ENCODE measurements at regions of chr15 and their contacts with region 1.

Region 1: DNA sequence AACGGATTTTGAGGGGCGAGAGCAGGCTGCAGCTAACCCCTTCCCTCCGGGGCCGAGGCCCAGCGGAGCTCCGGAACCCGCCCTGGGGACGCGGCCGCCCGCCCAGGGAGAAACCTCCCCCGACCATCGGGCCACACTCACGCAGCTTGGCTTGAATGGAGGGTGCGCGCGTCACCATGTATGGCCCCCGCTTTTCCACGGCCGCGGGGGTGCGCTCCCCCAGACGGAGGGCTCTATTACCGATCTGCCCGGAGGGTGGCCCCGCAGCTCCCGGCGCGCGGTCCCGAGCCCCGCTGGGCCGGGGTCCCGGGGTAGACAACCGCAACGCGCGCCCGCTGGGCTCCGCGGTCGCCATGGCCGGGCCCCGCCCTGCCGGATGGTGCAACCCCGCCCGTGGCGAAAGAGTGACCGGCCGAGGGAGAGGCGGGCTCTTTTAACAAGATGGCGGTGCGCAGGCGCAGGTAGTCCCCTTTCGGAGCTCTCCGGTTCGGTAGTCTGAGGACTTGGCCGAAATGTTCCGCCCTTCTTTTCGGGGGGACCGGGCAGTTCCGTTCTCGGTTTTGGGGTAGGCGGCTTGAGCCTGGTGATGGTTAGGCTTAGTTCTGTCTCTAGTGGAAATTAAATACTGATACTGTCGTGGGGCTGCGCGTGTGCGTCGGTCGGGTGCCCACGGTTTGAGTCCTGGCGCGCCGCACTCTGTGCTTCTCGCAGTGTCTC is at the start of gene FAM219B:
- DNase-seq: peak; percentile 87
- H3K4me3 ChIP-seq: peak within 1 kb of the TSS; percentile 38 to 79 (median 73)
- H3K27ac ChIP-seq: peak within 1 kb of the TSS; percentile 32
- H3K4me1 ChIP-seq: peaks cover 11% of the 10 kb centered on the region
- H3K27me3 ChIP-seq: no peaks in the 10 kb centered on the region
- CTCF ChIP-seq: no peak
- POLR2A ChIP-seq: peak; percentile 98
- total RNA-seq, gene FAM219B: 57.0 and 73.0 TPM in 2 replicates

Region 2: DNA sequence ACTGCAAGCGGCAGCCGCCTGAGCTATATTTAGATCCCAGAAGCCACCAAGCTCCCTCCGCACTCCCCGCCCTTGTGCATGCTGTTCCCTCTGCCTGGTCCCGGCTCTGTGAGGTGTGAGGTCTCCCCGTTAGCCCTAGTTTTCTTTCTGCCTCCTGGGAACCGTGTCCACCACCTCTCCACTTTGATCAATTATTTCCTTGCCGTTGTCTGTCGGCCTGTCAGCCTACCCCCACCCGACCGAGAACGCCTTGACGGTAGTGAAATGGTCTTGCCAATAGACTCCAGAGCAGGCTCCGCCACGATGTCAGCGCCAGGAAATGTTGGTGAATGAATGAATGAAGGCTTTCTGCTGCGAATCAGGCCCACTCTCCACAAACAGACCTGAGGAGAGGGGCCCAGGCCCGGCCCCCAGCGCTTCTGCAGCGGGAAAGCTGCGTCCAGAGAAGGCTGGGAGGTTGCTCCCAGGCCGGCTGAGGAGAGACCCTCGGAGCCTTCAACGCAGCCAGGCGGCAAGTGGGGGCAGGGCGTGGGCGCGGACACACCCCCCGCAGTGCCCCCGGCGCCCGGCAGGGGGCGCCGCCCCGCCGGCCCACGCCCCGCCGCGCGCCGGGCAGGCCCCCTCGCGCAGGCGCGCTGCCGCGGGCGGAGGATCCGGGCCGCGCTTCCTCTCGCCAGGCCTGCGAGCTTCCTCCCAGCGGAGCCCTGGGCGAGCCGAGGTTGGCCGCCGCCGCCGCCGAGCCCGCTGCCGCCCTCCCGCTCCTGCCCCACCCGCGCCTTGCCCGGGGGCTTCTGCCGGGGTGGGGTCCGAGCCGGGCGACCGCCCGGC is 125.0 kb before region 1 on chr15 and contains the start of gene CSK:
- CTCF ChIA-PET with region 1: interaction called, 21 read pairs
- POLR2A ChIA-PET with region 1: no interaction called
- dilution Hi-C with region 1: no loop called
- intact Hi-C with region 1: no loop called
- DNase-seq: peak; percentile 53
- H3K4me3 ChIP-seq: peak within 1 kb of the TSS; percentile 88 to 94 (median 90)
- H3K27ac ChIP-seq: peak within 1 kb of the TSS; percentile 62
- H3K4me1 ChIP-seq: peaks cover 37% of the 10 kb centered on the region
- H3K27me3 ChIP-seq: no peaks in the 10 kb centered on the region
- CTCF ChIP-seq: peak; percentile 52 to 65
- POLR2A ChIP-seq: peak; percentile 67
- total RNA-seq, gene CSK: 89.1 and 104 TPM in 2 replicates

Region 3: GRCh38 chr15:74835307-74835823 is 71.2 kb before region 1 on chr15:
- CTCF ChIA-PET with region 1: interaction called, 37 read pairs
- POLR2A ChIA-PET with region 1: no interaction called
- dilution Hi-C with region 1: no loop called
- intact Hi-C with region 1: no loop called
- DNase-seq: peak; percentile 51
- H3K4me3 ChIP-seq: no peak overlapping the region
- H3K27ac ChIP-seq: no peak overlapping the region
- H3K4me1 ChIP-seq: no peaks in the 10 kb centered on the region
- H3K27me3 ChIP-seq: no peaks in the 10 kb centered on the region
- CTCF ChIP-seq: peak; percentile 86 to 87
- POLR2A ChIP-seq: no peak

Region 4: DNA sequence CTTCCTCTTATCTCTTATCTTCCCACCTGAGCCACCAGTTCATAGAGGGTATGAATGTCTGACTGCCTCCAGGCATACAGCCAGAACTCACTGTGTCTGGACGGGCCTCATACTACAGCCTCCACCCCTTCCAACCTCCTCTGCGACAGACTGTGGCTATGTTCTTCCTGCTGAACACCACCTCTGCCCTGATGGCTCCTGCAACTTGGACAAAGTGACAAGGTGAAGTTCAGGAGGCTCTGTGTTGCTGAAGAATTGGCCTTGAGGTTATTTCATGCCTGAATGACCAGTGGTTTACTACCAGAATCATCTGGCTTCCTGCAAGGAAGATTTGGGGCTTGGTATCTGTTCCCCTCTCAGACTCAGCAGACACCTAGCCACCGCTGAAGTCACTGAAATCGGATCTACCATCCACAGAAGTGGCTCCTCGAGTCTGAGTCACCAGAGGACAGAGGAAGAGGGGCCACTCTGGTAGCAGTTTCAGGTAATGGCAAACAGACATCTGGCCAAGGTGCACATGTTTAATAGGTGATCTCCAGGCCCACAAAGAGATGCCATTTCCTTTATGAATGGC is 49.4 kb before region 1 on chr15:
- CTCF ChIA-PET with region 1: interaction called, 14 read pairs
- POLR2A ChIA-PET with region 1: no interaction called
- dilution Hi-C with region 1: no loop called
- intact Hi-C with region 1: no loop called
- DNase-seq: no peak
- H3K4me3 ChIP-seq: no peak overlapping the region
- H3K27ac ChIP-seq: no peak overlapping the region
- H3K4me1 ChIP-seq: no peaks in the 10 kb centered on the region
- H3K27me3 ChIP-seq: no peaks in the 10 kb centered on the region
- CTCF ChIP-seq: no peak
- POLR2A ChIP-seq: no peak

Region 5: DNA sequence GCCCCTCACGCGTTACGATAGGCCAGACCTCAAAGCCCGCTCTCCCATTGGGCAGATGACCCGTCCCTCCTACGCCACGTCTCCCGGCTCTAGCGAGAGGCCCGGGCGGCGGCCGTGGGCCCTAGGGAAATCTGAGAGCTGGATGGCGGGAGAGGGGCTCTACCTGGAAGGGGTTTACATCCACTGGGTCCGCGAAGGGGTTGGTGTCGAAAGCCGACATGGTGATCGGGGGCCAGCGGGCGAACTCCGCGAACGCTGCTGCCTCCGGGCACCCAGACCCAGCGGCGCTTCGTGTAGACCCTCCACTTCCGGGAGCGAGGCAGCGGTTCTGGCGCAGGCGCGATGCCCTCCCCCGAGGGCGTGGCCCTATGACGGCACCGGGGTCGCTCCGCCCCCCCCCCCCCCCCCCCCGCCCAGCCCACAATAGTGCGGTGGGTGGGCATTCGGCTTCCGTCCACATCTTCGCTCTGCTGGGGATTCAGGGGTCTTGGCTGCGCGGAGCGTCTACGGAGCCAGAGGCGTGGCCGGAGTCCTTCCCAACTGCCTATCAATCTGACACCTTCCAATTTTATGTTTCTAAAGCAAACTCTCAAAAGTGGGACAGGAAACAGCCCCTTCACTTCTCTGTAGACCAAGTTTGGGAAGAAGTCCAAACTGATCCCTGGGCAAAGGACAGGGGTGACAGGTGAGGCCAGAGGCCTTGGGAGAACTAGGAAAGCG is 33.4 kb before region 1 on chr15 and contains the start of gene SCAMP2:
- CTCF ChIA-PET with region 1: interaction called, 54 read pairs
- POLR2A ChIA-PET with region 1: no interaction called
- dilution Hi-C with region 1: no loop called
- intact Hi-C with region 1: loop called (anchors 1 kb)
- DNase-seq: peak; percentile 96
- H3K4me3 ChIP-seq: peak within 1 kb of the TSS; percentile 42 to 77 (median 72)
- H3K27ac ChIP-seq: peak within 1 kb of the TSS; percentile 89
- H3K4me1 ChIP-seq: peaks cover 34% of the 10 kb centered on the region
- H3K27me3 ChIP-seq: peaks cover 3% of the 10 kb centered on the region in 2 experiments
- CTCF ChIP-seq: no peak
- POLR2A ChIP-seq: peak; percentile 93
- total RNA-seq, gene SCAMP2: 61.1 and 67.3 TPM in 2 replicates

Region 6: DNA sequence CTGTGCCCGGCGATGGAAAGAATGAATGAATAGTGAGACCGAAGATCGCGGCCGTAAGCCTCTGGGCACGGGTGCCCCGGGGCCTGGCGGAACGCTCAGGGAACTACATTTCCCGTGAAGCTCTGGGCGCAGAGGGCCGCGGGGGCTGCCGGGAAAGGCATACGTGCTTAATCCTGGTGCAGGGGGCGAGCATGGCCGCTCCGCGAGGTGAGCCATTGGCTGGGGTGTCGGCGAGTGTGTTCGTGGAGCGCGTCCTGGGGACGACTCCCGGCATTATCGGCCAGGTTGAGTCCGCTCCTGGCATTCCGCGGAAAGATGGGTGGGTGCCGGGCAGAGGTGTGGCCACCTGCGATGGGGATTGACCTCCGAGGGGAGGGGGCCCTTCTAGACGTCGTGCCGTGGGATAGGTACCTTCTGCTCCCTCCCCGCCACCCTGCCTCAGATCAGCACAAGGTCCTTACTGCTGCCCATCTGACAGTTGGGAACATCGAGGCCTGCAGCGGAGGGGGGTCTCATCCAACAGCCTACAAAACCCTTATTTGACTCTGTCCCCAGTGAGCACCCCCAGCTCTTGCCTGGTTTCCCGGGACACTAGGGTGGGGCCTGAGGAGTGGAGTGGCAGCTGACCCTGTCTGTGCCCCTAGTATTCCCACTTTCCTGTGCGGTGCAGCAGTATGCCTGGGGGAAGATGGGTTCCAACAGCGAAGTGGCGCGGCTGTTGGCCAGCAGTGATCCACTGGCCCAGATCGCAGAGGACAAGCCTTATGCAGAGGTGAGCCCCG is 16.5 kb before region 1 on chr15 and contains the start of gene MPI:
- CTCF ChIA-PET with region 1: interaction called, 28 read pairs
- POLR2A ChIA-PET with region 1: interaction called, 3 read pairs
- dilution Hi-C with region 1: no loop called
- intact Hi-C with region 1: loop called (anchors 1 kb)
- DNase-seq: peak; percentile 86
- H3K4me3 ChIP-seq: peak within 1 kb of the TSS; percentile 30 to 83 (median 74)
- H3K27ac ChIP-seq: peak within 1 kb of the TSS; percentile 26
- H3K4me1 ChIP-seq: peaks cover 12% of the 10 kb centered on the region
- H3K27me3 ChIP-seq: no peaks in the 10 kb centered on the region
- CTCF ChIP-seq: no peak
- POLR2A ChIP-seq: peak; percentile 96
- total RNA-seq, gene MPI: 27.7 and 36.3 TPM in 2 replicates

Region 7: DNA sequence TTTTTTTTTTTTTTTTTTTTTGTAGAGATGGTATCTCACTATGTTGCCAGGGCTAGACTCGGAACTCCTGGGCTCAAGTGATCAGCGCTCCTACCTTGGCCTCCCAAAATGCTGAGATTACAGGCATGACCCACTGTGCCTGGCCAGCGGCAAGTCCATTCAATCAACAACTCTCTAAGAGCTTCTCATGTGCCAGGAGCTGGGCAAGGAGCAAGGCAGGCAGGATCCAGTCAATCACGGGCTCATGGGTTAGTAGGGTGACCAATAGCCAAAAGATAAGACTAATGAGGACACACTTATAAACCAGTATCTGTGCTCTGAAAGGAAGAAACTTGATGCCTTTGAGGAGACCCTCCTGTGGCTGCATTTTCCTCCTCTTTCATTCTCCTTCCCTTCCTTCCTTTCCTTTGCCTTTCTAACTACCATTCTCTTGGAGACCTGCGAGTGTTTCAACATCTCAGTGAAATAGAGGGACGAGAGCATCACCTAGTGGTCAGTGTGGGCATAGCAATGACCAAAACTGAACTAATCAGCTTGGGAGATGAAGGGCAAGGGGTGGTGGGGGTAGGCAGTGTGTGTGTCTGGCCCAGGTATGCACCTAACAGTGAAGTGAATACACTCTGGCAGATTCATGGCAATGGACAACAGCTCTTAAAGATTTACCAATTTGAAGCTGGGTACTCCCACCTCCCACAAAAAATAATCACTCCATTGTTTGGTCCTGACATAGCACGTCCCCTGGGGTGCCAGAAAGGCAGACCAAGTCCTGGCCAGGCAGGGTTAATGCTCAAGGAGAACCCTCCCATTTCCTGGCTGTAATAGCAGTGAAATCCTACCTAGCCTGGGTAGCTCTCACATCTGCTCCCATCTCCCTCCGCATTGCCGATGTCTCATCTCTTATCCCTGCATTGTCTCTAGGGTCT is 43.7 kb after region 1 on chr15:
- CTCF ChIA-PET with region 1: interaction called, 29 read pairs
- POLR2A ChIA-PET with region 1: no interaction called
- dilution Hi-C with region 1: no loop called
- intact Hi-C with region 1: loop called (anchors 1 kb)
- DNase-seq: peak; percentile 82
- H3K4me3 ChIP-seq: no peak overlapping the region
- H3K27ac ChIP-seq: no peak overlapping the region
- H3K4me1 ChIP-seq: peaks cover 12% of the 10 kb centered on the region
- H3K27me3 ChIP-seq: no peaks in the 10 kb centered on the region
- CTCF ChIP-seq: peak; percentile 91 to 97
- POLR2A ChIP-seq: no peak

Region 8: GRCh38 chr15:75073197-75073596 is 166.6 kb after region 1 on chr15:
- CTCF ChIA-PET with region 1: no interaction called
- POLR2A ChIA-PET with region 1: no interaction called
- dilution Hi-C with region 1: no loop called
- intact Hi-C with region 1: no loop called
- DNase-seq: no peak
- H3K4me3 ChIP-seq: no peak overlapping the region
- H3K27ac ChIP-seq: no peak overlapping the region
- H3K4me1 ChIP-seq: no peaks in the 10 kb centered on the region
- H3K27me3 ChIP-seq: no peaks in the 10 kb centered on the region
- CTCF ChIP-seq: no peak
- POLR2A ChIP-seq: no peak